ENCODE measurements at regions of chr4 and their contacts with region 1.

Region 1: DNA sequence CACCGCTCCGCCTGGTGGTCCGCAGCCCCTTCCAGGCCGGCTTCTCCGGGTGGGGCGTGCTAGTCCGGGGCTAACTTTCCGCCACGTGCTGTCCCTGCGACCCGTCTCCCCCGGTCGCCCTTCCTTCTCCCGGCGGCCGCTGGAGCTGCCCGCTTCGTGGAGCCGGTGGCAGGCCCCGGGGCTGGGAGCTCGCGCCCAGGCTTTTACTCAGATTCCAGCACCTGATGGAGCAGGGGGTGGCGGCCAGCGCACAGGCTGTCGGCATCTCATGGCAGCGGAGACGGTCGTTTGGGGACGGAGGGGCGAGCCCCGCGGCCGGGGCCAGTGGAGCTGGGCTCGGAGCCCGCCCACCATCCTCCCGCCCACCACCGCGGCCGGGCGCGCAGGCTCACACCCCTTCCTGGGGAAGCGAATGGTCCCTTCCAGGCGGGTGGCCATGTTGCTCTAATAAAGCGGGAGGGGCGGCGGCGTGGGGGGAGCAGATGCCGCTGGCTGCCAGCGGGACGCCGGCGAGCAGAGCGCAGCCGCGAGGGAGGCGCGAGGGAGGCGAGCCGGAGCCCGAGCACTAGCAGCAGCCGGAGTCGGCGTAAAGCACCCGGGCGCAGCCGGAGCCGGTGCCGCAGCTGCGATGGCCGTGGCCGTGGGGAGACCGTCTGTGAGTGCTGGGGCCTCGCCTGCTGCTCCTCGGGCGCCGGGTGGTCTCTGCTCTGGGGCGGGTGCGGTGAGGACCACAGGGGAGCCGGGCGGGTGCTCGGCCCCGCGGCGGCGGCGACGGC is at the start of gene SEPTIN11:
- DNase-seq: peak; percentile 96
- ATAC-seq: peak; percentile 93 to 95
- total RNA-seq, gene SEPTIN11: 59.6 to 65.6 TPM

Region 2: DNA sequence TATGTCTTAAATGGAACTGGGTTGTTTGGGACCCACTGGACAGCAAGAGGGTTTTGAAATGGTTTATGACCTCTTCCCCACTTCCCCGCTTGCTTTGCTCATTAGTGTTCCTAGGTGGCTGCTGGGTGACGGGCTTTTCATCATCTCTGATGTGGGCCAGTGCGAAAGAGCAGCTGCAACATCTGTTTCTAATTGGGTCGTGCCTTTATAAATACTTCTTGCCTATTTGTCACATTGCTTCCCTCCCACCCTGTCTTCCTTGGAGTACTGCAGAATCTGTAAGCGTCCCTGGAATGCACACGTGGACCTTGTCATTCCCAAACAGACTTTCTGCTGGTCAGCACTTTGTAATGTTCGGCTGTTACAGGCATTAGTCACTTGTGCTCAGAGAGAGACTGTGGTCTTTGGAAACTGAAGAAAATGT is 35.3 kb after region 1 on chr4:
- intact Hi-C with region 1: loop called in 1 of 2 experiments (anchors 5 kb)
- DNase-seq: peak; percentile 56
- ATAC-seq: peak; percentile 90 to 91

Measured in left cardiac atrium (tissue), 4 donors.